Caco-2 (cell line): ENCODE measurements at regions of chr5 and their contacts with region 1.

Region 1: DNA sequence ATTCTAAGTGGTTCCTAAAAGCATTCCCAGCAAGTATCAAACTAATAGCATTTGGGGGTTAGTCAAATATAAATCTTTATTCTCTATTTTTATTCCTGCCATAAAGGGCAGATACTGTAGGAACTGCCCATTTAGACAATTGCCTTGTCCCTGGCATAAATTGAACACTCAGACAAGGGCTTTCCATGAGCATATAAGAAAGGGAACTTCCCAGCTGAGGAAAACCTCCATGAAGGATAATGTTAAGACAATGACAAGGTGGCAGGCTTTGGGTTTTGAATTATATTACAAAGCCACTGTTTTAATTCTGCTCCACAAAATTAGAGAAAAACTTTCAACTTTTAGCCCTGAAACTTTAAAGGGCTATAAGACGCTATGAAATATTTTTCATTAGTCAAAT is 81.3 kb downstream of the ST8SIA4 start:
- DNase-seq: no peak
- H3K4me3 ChIP-seq: no peak overlapping the region
- H3K4me3 Mint-ChIP-seq: no peak overlapping the region
- H3K27ac Mint-ChIP-seq: peak overlapping the region; percentile 95
- H3K4me1 ChIP-seq: peaks cover 21% of the 10 kb centered on the region
- H3K4me1 Mint-ChIP-seq: peaks cover 8% of the 10 kb centered on the region
- H3K27me3 ChIP-seq: no peaks in the 10 kb centered on the region
- H3K27me3 Mint-ChIP-seq: no peaks in the 10 kb centered on the region
- CTCF ChIP-seq: no peak

Region 2: GRCh38 chr5:100790170-100790665 is 31.5 kb before region 1 on chr5:
- CTCF ChIA-PET with region 1: no interaction called
- POLR2A ChIA-PET with region 1: no interaction called
- intact Hi-C with region 1: loop called (anchors 1 kb)
- DNase-seq: peak; percentile 50 to 66
- H3K4me3 ChIP-seq: peak overlapping the region; percentile 10; the same call in 1 of the 2 replicates
- H3K4me3 Mint-ChIP-seq: peak overlapping the region; percentile 72
- H3K27ac Mint-ChIP-seq: peak overlapping the region; percentile 86
- H3K4me1 ChIP-seq: peaks cover 37% of the 10 kb centered on the region
- H3K4me1 Mint-ChIP-seq: peaks cover 24% of the 10 kb centered on the region
- H3K27me3 ChIP-seq: no peaks in the 10 kb centered on the region
- H3K27me3 Mint-ChIP-seq: no peaks in the 10 kb centered on the region
- CTCF ChIP-seq: peak; percentile 19 to 32

Region 3: DNA sequence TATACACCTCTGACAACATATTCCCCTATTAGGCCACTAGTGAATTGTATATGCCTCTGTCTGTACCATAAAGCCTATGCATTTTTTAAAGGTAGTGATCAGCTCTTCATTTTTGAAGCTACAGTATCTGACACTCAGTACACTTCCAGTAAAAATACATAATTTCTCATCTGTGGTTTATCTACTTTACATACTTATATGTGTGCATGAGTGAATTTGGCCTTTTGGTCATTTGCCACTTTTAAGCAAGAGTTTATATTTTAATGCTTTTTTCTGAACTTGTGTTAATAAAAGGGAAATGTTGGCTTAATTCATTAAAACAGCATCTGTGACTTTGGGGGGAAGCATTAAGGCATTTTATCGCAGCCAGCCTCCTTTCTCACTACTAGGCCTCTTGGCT is 33.5 kb after region 1 on chr5:
- CTCF ChIA-PET with region 1: no interaction called
- POLR2A ChIA-PET with region 1: no interaction called
- intact Hi-C with region 1: loop called (anchors 5 kb)
- DNase-seq: no peak
- H3K4me3 ChIP-seq: no peak overlapping the region
- H3K4me3 Mint-ChIP-seq: no peak overlapping the region
- H3K27ac Mint-ChIP-seq: no peak overlapping the region
- H3K4me1 ChIP-seq: no peaks in the 10 kb centered on the region
- H3K4me1 Mint-ChIP-seq: no peaks in the 10 kb centered on the region
- H3K27me3 ChIP-seq: no peaks in the 10 kb centered on the region
- H3K27me3 Mint-ChIP-seq: no peaks in the 10 kb centered on the region
- CTCF ChIP-seq: no peak

Region 4: GRCh38 chr5:100890461-100891008 is 68.8 kb after region 1 on chr5:
- CTCF ChIA-PET with region 1: no interaction called
- POLR2A ChIA-PET with region 1: no interaction called
- intact Hi-C with region 1: no loop called
- DNase-seq: no peak
- H3K4me3 ChIP-seq: no peak overlapping the region
- H3K4me3 Mint-ChIP-seq: no peak overlapping the region
- H3K27ac Mint-ChIP-seq: no peak overlapping the region
- H3K4me1 ChIP-seq: no peaks in the 10 kb centered on the region
- H3K4me1 Mint-ChIP-seq: no peaks in the 10 kb centered on the region
- H3K27me3 ChIP-seq: no peaks in the 10 kb centered on the region
- H3K27me3 Mint-ChIP-seq: peaks cover 3% of the 10 kb centered on the region
- CTCF ChIP-seq: no peak